Activated naive CD4-positive, alpha-beta T cell treated with anti-CD3 and anti-CD28 coated beads for 36 hours (primary cell): ENCODE measurements at regions of chr2 and their contacts with region 1.

Region 1: GRCh38 chr2:205706769-205707381 is 24.6 kb downstream of the NRP2 start:
- DNase-seq: peak; percentile 81
- H3K4me3 Mint-ChIP-seq: peak overlapping the region; percentile 20
- H3K27ac Mint-ChIP-seq: peak overlapping the region; percentile 82
- H3K4me1 Mint-ChIP-seq: peaks cover 14% of the 10 kb centered on the region
- H3K27me3 Mint-ChIP-seq: no peaks in the 10 kb centered on the region

Region 2: DNA sequence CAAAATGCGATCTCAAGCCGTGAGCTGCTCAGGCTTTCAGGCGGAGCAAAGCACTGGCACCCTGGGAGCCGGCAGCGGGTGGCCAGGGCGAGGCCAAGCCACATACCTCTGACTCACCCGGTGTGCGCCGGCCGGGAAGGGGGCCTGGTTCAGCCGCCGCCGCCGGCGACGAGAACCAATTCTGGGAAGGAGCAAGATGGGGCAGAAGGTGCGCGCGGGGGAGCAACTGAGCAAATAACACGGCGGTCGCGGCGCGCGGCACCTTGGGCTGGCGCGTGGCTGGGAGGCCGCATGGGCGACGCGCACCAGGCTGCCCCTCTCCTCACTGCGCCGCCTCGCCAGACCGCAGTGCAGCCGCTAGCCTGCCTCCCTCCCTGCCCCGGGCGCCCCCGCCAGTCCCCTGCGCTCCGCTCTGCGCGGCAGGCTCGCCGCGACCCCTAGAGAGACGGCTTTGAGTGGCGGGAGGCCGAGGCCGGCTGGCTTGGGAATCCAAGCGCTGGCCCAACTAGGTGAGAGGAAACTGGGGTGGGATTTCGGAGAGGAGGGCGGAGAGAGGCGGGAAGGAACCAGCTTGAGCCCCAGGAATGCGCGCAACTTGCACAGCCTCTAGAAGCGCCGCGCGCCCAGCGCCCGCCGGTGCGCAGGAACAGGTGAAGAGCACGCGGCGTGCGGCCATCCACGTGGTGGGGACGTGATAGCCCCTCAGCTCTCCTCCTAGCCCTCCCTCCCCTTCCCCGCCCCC is 21.4 kb before region 1 on chr2:
- CTCF ChIA-PET with region 1: interaction called, 5 read pairs
- intact Hi-C with region 1: loop called (anchors 1 kb)
- DNase-seq: peak; percentile 39
- H3K4me3 Mint-ChIP-seq: peak overlapping the region; percentile 70
- H3K27ac Mint-ChIP-seq: no peak overlapping the region
- H3K4me1 Mint-ChIP-seq: peaks cover 26% of the 10 kb centered on the region
- H3K27me3 Mint-ChIP-seq: peaks cover 61% of the 10 kb centered on the region

Region 3: DNA sequence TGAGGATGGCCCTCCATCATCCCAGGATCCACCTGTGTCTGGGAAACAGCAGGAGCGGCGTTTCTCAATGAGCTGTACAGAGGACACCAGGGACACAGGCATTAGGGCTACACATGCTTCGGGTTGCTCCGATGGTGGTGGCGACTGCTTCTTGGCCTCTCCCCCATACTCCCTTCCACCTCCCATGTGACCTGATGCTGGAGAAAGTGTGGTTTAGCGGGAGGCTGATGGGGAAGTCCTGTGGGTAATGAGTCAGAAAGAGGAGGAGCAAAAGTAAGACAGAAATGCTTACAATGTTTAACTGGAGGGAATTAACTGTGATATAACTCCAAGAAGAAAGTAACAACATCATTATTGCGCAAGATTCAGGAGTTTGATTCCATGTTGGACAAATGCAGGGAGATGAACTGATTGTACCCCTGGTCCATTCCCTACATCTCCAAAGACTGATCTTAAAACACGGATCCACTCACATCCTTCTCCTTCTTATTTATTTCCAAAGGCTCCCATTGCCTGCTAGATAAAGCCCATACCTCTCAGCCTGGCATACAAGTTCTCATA is 162.0 kb after region 1 on chr2:
- CTCF ChIA-PET with region 1: no interaction called
- intact Hi-C with region 1: loop called (anchors 2 kb)
- DNase-seq: peak; percentile 78
- H3K4me3 Mint-ChIP-seq: no peak overlapping the region
- H3K27ac Mint-ChIP-seq: peak overlapping the region; percentile 25
- H3K4me1 Mint-ChIP-seq: peaks cover 18% of the 10 kb centered on the region
- H3K27me3 Mint-ChIP-seq: peaks cover 42% of the 10 kb centered on the region